ENCODE measurements at regions of chr2 and their contacts with region 1.

Region 1: DNA sequence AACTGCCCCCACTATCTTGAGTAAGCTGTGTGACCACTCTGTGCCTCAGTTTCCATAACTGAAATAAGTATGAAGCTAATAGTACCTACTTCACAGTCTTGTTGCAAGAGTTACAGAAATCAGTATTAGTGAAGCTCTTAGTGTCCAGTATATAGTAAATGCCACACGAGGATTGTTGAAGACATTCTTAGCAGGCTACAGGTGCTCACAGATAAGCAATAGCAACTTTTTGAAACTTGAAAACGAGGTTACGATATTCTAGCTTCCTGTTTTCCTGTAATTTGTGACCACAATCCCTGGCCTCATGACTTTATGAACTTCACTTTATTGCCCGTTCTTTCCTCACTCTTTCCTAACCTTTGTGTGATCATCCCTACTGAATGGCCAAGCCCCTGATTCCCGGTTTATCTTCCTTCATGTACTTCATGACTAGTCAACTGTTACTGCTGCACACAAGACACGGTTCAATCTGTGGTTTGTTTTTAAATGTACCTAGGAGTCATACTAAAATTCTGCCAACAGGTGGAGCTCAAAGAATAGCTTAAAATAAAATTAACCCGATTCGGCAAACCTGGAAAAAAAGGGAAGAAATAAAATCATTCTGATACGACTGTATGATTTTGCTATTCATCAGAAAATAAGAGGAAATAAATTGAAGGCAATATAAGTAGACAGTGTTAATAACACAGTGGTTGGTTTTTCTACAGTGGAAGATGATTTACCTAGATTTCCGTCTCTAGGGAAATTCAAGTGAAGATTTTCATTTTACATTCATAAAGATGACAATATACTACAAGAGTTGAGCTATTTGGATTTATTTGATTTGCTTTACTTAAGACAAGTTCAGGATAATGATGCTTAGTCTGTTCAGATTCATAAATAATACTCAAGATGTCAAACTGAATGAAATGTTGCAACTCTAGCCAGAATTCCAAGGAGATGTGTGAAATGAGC is 38.1 kb upstream of the STAT1 start:
- DNase-seq: peak in 2 of 5 donors; percentile 53 to 65
- H3K4me3 ChIP-seq: no peak overlapping the region
- H3K4me3 Mint-ChIP-seq: no peak overlapping the region
- H3K27ac ChIP-seq: no peak overlapping the region
- H3K27ac Mint-ChIP-seq: no peak overlapping the region
- H3K4me1 ChIP-seq: peaks cover 18% of the 10 kb centered on the region
- H3K4me1 Mint-ChIP-seq: peaks cover 22 to 34% (median 24%) of the 10 kb centered on the region in 3 donors
- H3K27me3 ChIP-seq: no peaks in the 10 kb centered on the region
- H3K27me3 Mint-ChIP-seq: no peaks in the 10 kb centered on the region

Region 2: GRCh38 chr2:191041418-191042161 is 10.5 kb before region 1 on chr2:
- CTCF ChIA-PET with region 1: interaction called, 28 read pairs
- POLR2A ChIA-PET with region 1: interaction called, 4 read pairs
- DNase-seq: no peak
- H3K4me3 ChIP-seq: no peak overlapping the region
- H3K4me3 Mint-ChIP-seq: no peak overlapping the region
- H3K27ac ChIP-seq: no peak overlapping the region
- H3K27ac Mint-ChIP-seq: peak overlapping the region in 7 of 8 donors; percentile 5 to 81 (median 64)
- H3K4me1 ChIP-seq: peaks cover 27% of the 10 kb centered on the region
- H3K4me1 Mint-ChIP-seq: peaks cover 36 to 45% (median 38%) of the 10 kb centered on the region in 3 donors
- H3K27me3 ChIP-seq: no peaks in the 10 kb centered on the region
- H3K27me3 Mint-ChIP-seq: no peaks in the 10 kb centered on the region

Region 3: GRCh38 chr2:191064590-191064989 is 12.5 kb after region 1 on chr2:
- CTCF ChIA-PET with region 1: interaction called, 15 read pairs
- POLR2A ChIA-PET with region 1: interaction called, 6 read pairs
- DNase-seq: peak in 3 of 5 donors; percentile 6 to 51 (median 29)
- H3K4me3 ChIP-seq: peak overlapping the region; percentile 43
- H3K4me3 Mint-ChIP-seq: peak overlapping the region; percentile 82 to 96 (median 90)
- H3K27ac ChIP-seq: no peak overlapping the region
- H3K27ac Mint-ChIP-seq: peak overlapping the region; percentile 86 to 98 (median 96)
- H3K4me1 ChIP-seq: peaks cover 67% of the 10 kb centered on the region
- H3K4me1 Mint-ChIP-seq: peaks cover 73 to 92% (median 88%) of the 10 kb centered on the region in 3 donors
- H3K27me3 ChIP-seq: no peaks in the 10 kb centered on the region
- H3K27me3 Mint-ChIP-seq: no peaks in the 10 kb centered on the region

Region 4: DNA sequence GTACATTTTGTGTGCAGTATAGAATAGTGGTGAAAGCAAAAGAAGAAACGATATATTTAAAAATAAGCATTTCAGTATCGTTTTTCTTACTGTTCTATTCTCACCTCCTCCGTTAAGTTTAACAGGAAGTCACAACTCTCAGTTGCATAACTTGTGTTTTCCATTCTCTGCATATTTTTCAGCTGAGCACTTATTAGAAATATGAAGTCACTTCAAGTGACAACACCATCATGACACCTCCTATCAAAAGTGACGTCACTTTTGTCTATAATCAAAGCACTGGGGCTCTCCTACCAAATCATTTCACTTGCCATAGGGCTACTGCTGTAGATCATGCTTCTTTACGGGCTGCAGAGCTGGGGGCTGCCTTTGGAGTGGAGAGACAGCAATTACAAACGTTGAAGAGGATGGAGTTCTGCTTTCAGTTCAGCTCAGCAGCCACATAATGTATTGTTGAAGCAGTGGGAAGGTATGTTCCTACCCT is 62.3 kb after region 1 on chr2:
- CTCF ChIA-PET with region 1: interaction called, 13 read pairs
- POLR2A ChIA-PET with region 1: no interaction called
- DNase-seq: peak in 4 of 5 donors; percentile 30 to 68 (median 50)
- H3K4me3 ChIP-seq: no peak overlapping the region
- H3K4me3 Mint-ChIP-seq: peak overlapping the region; percentile 28 to 83 (median 68)
- H3K27ac ChIP-seq: peak overlapping the region; percentile 65
- H3K27ac Mint-ChIP-seq: peak overlapping the region; percentile 91 to 100 (median 98)
- H3K4me1 ChIP-seq: peaks cover 51% of the 10 kb centered on the region
- H3K4me1 Mint-ChIP-seq: peaks cover 76 to 93% (median 89%) of the 10 kb centered on the region in 3 donors
- H3K27me3 ChIP-seq: no peaks in the 10 kb centered on the region
- H3K27me3 Mint-ChIP-seq: no peaks in the 10 kb centered on the region

Region 5: DNA sequence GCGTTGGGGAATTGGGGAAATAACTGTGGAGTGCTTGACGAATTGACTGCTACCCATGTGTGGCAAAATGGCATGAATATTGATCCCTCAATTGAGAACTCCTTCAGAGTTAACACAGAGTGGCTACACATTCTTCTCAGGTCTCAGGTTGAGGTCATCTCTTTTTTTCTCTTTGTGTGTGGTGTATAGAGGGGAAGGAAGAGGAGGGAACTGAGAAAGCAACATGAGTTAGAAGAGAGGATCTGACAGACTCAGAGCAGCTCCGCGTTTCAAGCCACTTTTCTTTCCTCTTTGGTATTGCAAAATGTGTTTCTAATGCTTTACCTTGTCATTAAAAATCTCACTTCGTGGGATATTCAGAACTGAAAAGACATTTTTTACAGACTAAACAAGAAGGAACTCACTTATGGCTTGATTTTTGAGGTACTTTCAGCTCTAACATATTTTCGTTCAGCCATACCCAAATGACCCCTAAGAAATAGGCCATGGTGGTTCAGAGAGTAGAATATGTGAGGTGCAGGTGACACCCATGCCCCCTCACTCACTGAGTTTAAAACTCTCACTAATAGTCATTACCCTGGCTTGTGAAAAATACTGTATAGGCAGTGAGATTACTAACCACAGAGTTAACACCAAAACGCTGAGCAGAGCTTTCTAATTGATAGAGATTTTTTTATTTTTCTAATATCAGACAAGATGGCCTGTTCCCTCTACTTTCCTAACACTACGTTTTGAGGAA is 76.2 kb after region 1 on chr2:
- CTCF ChIA-PET with region 1: interaction called, 19 read pairs
- POLR2A ChIA-PET with region 1: interaction called, 4 read pairs
- DNase-seq: peak in 3 of 5 donors; percentile 12 to 63 (median 19)
- H3K4me3 ChIP-seq: peak overlapping the region; percentile 17
- H3K4me3 Mint-ChIP-seq: peak overlapping the region; percentile 66 to 83 (median 80)
- H3K27ac ChIP-seq: peak overlapping the region; percentile 65
- H3K27ac Mint-ChIP-seq: peak overlapping the region; percentile 85 to 98 (median 95)
- H3K4me1 ChIP-seq: peaks cover 42% of the 10 kb centered on the region
- H3K4me1 Mint-ChIP-seq: peaks cover 69 to 83% (median 81%) of the 10 kb centered on the region in 3 donors
- H3K27me3 ChIP-seq: no peaks in the 10 kb centered on the region
- H3K27me3 Mint-ChIP-seq: no peaks in the 10 kb centered on the region

Region 6: GRCh38 chr2:191521608-191522208 is 469.6 kb after region 1 on chr2:
- CTCF ChIA-PET with region 1: interaction called, 11 read pairs
- POLR2A ChIA-PET with region 1: no interaction called
- DNase-seq: peak in 2 of 5 donors; percentile 7 to 21
- H3K4me3 ChIP-seq: no peak overlapping the region
- H3K4me3 Mint-ChIP-seq: no peak overlapping the region
- H3K27ac ChIP-seq: no peak overlapping the region
- H3K27ac Mint-ChIP-seq: no peak overlapping the region
- H3K4me1 ChIP-seq: no peaks in the 10 kb centered on the region
- H3K4me1 Mint-ChIP-seq: no peaks in the 10 kb centered on the region
- H3K27me3 ChIP-seq: no peaks in the 10 kb centered on the region
- H3K27me3 Mint-ChIP-seq: peaks cover 3 to 25% of the 10 kb centered on the region in 2 donors

Measured in CD8-positive, alpha-beta memory T cell (primary cell).